Right cardiac atrium (tissue), 5 donors: ENCODE measurements at regions of chr5 and their contacts with region 1.

Region 1: DNA sequence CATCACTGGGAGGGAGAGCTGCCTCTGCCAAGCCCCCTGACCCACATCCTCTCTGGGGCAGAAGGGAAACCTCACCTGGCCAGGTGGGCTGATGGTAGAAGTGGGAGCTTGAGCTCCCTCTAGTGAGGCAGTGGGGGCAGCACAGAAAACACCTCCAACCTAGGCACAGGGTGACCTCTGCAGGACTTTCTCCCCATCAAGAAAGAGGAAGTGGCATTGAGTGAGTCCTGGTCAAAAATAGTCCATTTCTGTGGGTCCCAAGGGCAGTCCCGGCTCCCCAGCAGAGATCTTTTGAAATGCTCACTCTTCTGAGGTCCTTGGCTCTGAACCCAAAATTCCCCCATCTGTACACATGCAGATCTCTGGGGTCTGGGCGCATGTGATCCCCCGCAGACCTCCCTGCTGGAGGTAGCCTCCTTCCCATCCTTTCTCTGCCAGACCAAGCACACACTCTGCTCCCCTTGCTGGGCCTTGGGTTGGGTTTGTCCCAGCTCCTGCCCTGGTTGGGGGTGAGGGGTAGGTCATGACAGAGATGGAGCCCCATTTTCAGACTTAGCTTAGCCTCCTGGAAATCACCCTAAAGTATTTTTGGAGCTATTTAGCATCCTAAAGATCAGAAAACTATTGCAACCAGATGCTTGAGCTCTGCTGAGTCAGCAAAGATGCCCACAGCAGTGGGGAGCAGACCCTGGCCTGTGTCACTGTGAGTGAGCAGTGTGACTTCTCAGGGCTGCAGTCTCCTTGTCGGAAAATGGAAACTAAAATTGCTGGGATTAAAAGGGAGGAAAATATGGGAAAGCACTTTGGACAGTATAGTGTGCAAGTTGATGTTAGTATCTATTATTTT is 41.6 kb upstream of the LCP2 start:
- DNase-seq: no peak
- ATAC-seq: peak; percentile 27 to 47
- H3K4me3 ChIP-seq: no peak overlapping the region
- H3K27ac ChIP-seq: no peak overlapping the region
- H3K4me1 ChIP-seq: no peaks in the 10 kb centered on the region
- H3K27me3 ChIP-seq: no peaks in the 10 kb centered on the region

Region 2: GRCh38 chr5:170287532-170287931 is 51.6 kb before region 1 on chr5:
- intact Hi-C with region 1: loop called in 1 of 4 experiments (anchors 10 kb)
- DNase-seq: peak; percentile 65 to 79 (median 77)
- ATAC-seq: peak; percentile 84 to 87
- H3K4me3 ChIP-seq: no peak overlapping the region
- H3K27ac ChIP-seq: no peak overlapping the region
- H3K4me1 ChIP-seq: no peaks in the 10 kb centered on the region
- H3K27me3 ChIP-seq: no peaks in the 10 kb centered on the region

Region 3: DNA sequence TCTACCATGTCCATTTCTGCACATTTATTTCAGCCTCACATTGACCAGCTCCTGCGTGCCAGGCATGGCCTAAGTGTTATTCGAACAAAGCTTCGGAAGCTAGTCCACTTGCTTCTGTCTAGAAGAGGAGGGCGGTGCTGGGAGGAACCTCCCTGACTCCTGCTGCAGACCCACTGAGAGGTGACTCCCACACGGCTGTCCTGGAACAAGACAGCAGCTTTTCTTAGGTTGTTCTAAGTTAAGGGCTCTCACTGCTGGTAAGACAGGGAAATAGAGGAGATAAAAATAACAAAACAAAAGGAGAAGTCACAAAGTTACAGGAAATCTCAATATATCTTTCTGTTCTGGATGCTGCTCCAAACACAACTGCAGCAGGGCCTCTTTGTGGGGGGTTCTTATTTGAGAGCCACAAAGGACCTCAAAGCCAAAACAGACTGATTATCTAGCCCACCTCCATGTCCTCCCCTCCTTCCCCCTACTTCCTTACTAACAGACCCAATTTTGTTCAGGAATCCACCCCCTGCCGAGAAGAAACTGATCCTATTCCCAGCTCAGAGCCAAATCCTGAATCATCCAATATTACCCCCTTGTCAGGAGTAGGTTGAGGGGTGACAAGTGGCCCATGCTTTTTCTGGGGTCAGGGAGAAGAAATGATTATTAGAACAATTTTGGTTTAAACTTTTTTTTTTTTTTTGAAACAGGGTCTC is 136.3 kb after region 1 on chr5:
- intact Hi-C with region 1: no loop called
- DNase-seq: no peak
- ATAC-seq: peak in 1 of 2 donors; percentile 26
- H3K4me3 ChIP-seq: no peak overlapping the region
- H3K27ac ChIP-seq: no peak overlapping the region
- H3K4me1 ChIP-seq: no peaks in the 10 kb centered on the region
- H3K27me3 ChIP-seq: no peaks in the 10 kb centered on the region